ENCODE measurements at regions of chr1 and their contacts with region 1.

Region 1: DNA sequence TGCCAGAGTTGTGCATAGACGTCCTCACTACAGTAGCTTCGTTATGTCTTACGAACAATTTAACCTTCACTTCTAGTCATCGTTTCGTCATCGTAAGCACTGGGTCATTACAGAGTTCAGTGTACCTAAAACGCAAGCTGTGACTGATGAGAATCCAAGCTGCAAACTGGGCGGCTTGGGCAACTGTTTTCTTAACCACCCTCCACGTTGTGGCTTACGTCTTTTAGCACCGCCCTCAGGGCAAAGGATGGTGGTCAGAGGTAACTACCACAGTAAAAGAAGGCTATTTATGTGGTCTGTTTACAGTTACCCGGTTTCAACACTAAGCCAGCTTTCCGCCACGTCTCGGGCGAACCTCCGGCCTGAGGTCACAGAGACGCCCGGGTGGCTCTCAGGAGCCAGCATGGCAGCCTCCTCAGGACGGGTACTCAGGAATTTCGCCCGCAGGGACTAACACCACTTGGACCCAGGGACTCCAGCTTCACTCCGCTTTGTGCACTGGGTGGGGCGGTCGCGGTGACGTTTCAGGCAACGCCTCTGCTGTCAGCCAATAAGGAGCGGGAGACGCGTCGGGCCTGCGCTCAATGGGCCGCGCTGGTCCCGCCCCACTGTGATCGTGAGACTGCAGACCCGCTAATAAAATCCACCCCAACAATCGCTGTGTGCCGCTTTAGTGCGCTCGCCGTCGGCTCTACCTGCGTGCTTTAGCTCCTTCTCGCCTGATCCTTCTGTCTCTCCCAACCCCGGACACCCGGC is at the start of gene CTH:
- DNase-seq: peak; percentile 98
- ATAC-seq: peak; percentile 100
- total RNA-seq, gene CTH: 0.60 TPM

Region 2: GRCh38 chr1:70205434-70206118 is 205.2 kb before region 1 on chr1 and contains the start of gene LRRC40:
- intact Hi-C with region 1: loop called (anchors 10 kb)
- DNase-seq: peak; percentile 98
- ATAC-seq: peak; percentile 100
- total RNA-seq, gene LRRC40: 10.5 TPM

Region 3: DNA sequence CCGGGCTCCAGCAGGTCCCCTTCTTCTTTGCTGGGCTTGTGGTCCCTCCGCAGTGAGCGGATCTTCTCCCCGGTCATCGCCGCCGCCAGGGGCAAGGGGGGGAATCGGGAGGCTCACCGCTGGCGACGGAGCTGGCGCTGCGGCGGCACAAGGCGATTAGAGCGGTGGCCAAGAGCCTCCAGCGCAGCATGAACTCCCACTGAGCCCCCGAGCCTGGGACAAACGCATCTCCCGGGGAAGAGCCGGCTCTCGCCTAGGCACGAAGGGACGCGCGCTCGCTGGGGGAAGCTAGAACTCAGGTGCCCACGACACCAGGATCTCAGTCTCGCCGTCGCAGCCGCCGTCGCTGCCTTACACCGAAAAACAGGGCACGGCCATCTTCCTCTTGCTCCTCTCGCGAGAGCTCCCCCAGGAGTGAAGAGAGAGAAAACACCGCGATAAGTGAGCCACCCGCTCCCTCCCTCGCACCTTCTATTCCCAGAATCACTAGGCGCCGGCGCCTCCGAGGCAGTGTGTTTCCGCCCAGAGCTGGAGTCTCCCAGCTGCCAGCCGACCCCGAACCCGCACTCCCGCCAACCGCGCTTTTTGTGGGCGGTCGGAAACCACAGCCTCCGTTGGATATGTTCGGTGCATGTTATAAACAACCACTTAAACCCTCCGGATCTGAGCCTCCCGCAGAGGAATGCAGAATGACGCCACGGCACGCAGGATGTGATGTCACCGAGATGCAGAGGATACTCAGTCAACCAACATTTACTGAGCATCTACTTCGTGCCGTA is 56.3 kb before region 1 on chr1 and contains the start of gene ANKRD13C:
- intact Hi-C with region 1: loop called (anchors 2 kb)
- DNase-seq: peak; percentile 94
- ATAC-seq: peak; percentile 98
- total RNA-seq, gene ANKRD13C: 9.4 TPM

Measured in Right ventricle myocardium inferior (tissue), 1 donor.